Posterior vena cava (tissue), 2 donors: ENCODE measurements at regions of chr17 and their contacts with region 1.

Region 1: DNA sequence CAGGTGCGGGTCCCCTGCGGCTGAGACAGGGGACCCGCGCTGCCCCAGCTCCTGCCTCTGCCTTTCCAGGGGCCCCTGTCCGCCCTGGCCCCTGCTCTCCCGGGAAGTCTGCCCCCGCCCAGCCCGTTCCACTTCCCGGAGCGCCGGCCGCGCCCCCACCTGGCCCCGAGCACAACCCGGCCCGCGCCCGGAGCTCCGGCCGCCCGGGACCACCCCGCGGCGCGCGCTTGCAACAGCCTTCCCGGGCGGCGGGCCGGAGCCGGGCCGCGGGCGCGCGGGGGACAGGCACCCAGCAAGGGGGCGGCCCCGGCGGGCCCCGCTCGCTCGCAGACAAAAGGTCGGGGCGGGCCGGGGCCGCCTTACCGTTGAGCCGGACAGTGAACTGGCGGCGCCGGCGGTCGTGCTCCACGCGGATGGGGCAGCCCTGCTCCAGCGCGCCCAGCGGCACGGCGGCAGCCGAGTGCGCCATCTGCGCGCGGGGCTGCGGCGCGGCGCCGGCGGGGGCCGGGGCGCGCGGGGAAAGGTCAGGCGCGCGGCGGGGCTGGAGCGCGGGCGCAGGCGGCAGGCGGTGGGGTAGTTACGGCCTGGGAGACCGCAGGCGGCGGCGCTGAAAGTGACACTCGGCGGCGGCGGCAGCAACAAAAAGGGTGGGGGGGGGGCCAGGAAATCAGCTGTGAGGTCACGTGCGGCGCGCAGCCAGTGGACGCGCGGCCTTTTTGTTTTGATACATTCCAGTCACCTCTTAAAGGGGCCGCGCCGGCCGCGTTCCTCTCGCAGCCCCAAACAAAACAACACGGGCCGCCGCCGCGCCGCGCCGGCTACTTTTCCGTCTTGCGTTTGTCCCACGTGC is at the start of gene NATD1:
- DNase-seq: peak; percentile 96
- total RNA-seq, gene NATD1: 7.8 to 8.8 TPM

Region 2: DNA sequence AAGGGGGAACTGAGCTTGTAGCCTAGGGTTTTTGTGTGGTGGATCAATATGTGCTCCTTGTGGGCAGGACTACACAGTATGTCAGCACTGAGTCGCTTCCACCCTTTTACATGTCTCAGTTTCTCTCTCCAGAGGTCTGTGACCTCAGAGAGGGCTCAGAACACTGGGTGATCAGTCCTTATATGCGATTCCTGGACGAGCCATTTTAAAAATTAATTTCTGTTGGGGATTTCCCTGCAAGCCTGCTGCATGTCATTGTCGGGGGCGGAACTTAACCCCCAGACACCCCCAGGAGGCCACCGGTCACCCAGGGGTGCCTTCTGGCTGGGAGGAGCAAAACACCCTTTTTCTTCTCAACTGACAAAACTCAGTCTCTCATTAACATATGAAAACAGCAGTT is 112.1 kb before region 1 on chr17:
- intact Hi-C with region 1: loop called in 1 of 2 experiments (anchors 10 kb)
- DNase-seq: no peak

Region 3: GRCh38 chr17:21376759-21377690 is 124.0 kb after region 1 on chr17:
- intact Hi-C with region 1: no loop called
- DNase-seq: no peak

Region 4: GRCh38 chr17:22158364-22158763 is 905.3 kb after region 1 on chr17:
- intact Hi-C with region 1: no loop called
- DNase-seq: no peak